HEK293 (cell line): ENCODE measurements at regions of chr17 and their contacts with region 1.

Region 1: GRCh38 chr17:34361478-34362061 is 1.5 kb downstream of the CCL1 start:
- H3K4me3 ChIP-seq: no peak overlapping the region
- H3K27ac ChIP-seq: no peak overlapping the region
- H3K4me1 ChIP-seq: no peaks in the 10 kb centered on the region
- CTCF ChIP-seq: peak; percentile 97

Region 2: GRCh38 chr17:34146440-34147043 is 215.0 kb before region 1 on chr17:
- CTCF ChIA-PET with region 1: interaction called, 19 read pairs
- POLR2A ChIA-PET with region 1: no interaction called
- H3K4me3 ChIP-seq: no peak overlapping the region
- H3K27ac ChIP-seq: no peak overlapping the region
- H3K4me1 ChIP-seq: no peaks in the 10 kb centered on the region
- CTCF ChIP-seq: peak; percentile 74

Region 3: DNA sequence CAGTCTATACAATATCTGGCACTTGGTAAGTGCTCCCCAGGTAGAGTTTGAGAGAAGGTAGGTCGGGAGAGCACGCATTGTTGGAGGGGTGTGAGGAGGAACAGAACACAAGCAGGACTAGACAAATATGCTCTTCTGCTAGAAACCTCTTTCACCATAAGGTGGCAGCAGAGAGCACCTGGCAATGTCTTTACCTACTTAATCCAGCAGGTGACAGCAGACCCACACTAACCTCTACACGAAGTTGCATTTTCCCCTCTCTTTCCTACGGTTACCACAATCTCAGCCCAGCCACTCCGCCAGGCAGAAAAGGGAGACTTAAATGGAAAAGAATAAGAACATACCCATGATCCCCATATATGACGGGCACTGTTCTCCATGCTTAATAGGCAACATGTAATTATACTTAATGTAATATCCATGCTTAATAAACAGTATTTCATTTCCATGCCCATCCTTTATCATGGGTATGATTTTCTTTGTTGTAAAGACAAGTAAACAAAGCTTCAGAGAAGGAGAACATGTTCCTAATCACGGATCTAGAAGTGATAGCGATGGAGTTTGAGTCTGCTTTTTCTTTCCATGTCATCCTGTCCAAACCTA is 161.5 kb before region 1 on chr17:
- CTCF ChIA-PET with region 1: interaction called, 578 read pairs
- POLR2A ChIA-PET with region 1: interaction called, 5 read pairs
- H3K4me3 ChIP-seq: no peak overlapping the region
- H3K27ac ChIP-seq: no peak overlapping the region
- H3K4me1 ChIP-seq: no peaks in the 10 kb centered on the region
- CTCF ChIP-seq: peak; percentile 99

Region 4: GRCh38 chr17:34269969-34270368 is 91.6 kb before region 1 on chr17 and contains the start of gene CCL7:
- CTCF ChIA-PET with region 1: interaction called, 22 read pairs
- POLR2A ChIA-PET with region 1: no interaction called
- H3K4me3 ChIP-seq: no peak within 1 kb of the TSS
- H3K27ac ChIP-seq: no peak within 1 kb of the TSS
- H3K4me1 ChIP-seq: no peaks in the 10 kb centered on the region
- CTCF ChIP-seq: no peak

Region 5: GRCh38 chr17:34318474-34318873 is 43.1 kb before region 1 on chr17:
- CTCF ChIA-PET with region 1: interaction called, 206 read pairs
- POLR2A ChIA-PET with region 1: no interaction called
- H3K4me3 ChIP-seq: no peak overlapping the region
- H3K27ac ChIP-seq: no peak overlapping the region
- H3K4me1 ChIP-seq: no peaks in the 10 kb centered on the region
- CTCF ChIP-seq: no peak

Region 6: GRCh38 chr17:34386697-34387550 is 25.4 kb after region 1 on chr17:
- CTCF ChIA-PET with region 1: interaction called, 24 read pairs
- POLR2A ChIA-PET with region 1: no interaction called
- H3K4me3 ChIP-seq: no peak overlapping the region
- H3K27ac ChIP-seq: no peak overlapping the region
- H3K4me1 ChIP-seq: no peaks in the 10 kb centered on the region
- CTCF ChIP-seq: no peak

Region 7: GRCh38 chr17:34571428-34572130 is 210.0 kb after region 1 on chr17:
- CTCF ChIA-PET with region 1: no interaction called
- POLR2A ChIA-PET with region 1: no interaction called
- H3K4me3 ChIP-seq: no peak overlapping the region
- H3K27ac ChIP-seq: no peak overlapping the region
- H3K4me1 ChIP-seq: no peaks in the 10 kb centered on the region
- CTCF ChIP-seq: no peak